ENCODE measurements at regions of chr1 and their contacts with region 1.

Region 1: DNA sequence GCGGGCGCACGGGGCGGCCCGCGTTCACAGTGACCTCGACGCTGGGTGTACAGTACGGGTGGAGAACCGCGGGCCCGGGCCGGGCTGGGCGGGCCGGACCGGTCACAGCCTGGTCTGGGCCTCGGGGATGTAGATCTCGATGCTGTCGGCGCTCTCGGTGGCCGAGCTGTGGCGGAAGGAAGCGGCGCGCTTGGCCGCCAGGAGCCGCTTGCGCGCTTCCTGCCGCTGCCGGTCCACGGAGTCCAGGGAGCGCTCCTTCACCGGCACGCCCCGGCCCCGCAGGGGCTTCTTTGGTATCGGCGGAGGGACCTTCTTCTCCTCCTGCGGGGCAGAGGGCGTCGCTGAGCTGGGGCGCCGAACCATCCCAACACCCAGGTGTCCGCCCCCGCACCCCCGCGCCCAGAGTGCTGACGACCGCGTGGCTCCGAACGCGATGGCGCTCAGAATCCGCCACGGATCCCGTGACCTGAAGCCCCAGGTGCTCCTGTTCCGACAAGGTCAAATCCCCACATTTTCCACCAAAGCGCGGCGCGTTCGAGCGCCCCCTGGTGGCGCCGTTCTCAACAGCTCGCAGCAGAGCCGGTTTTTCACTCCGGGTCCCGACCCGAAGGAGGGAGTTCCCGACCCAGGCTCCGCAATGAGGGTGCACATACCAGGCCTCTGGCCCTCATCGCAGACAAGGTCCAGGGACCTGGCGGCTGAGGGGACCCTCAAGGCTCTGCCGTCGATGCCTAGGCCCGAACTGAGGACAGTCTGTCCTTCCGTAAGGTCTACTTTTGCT is 6.6 kb upstream of the SMIM12 start:
- DNase-seq: peak; percentile 80 to 93 (median 86)
- ATAC-seq: peak; percentile 32 to 84 (median 76)
- H3K4me3 ChIP-seq: peak overlapping the region; percentile 32 to 95 (median 71)
- H3K27ac ChIP-seq: peak overlapping the region in 11 of 12 donors; percentile 60 to 94 (median 83)
- H3K4me1 ChIP-seq: peaks cover 0 to 23% (median 10%) of the 10 kb centered on the region in 12 donors
- H3K27me3 ChIP-seq: no peaks in the 10 kb centered on the region
- CTCF ChIP-seq: peak; percentile 93 to 99 (median 98)
- POLR2A ChIP-seq: no peak

Region 2: GRCh38 chr1:34786521-34787325 is 79.4 kb before region 1 on chr1:
- intact Hi-C with region 1: loop called in 5 of 10 experiments (anchors 1 to 5 kb)
- DNase-seq: peak; percentile 66 to 79 (median 73)
- ATAC-seq: peak; percentile 50 to 82 (median 78)
- H3K4me3 ChIP-seq: no peak overlapping the region
- H3K27ac ChIP-seq: no peak overlapping the region
- H3K4me1 ChIP-seq: peaks cover 0 to 34% (median 6%) of the 10 kb centered on the region in 12 donors
- H3K27me3 ChIP-seq: peaks cover 6 to 22% (median 10%) of the 10 kb centered on the region in 9 donors
- CTCF ChIP-seq: peak; percentile 80 to 93 (median 86)
- POLR2A ChIP-seq: no peak

Region 3: DNA sequence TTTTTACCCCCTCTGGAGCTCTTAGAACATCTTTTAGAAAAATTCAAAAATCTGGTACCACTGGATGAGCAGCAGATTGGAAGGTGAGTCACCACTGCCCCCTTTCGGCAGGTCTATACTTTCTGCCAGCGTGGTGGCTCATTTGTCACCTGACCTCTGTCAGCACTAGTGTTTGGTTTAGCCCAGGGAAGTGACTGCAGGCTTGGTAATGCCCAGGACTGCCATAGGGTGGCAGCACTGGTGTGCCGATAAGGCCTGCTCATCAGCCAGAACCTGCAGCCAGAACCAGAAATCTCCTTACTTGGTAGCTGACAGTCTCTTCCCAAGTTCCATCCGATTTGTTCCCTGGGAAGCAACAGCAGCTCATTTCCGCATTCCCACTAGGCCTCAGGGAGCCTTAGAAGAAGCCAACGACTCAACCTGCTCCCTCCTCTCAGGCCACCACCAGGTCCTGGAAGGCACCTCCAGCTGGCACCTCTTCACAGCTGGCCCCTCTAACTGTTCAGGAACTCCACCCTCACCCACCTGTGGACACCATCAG is 13.4 kb before region 1 on chr1:
- intact Hi-C with region 1: loop called in 2 of 10 experiments (anchors 1 kb)
- DNase-seq: peak; percentile 86 to 90 (median 88)
- ATAC-seq: peak; percentile 83 to 95 (median 94)
- H3K4me3 ChIP-seq: no peak overlapping the region
- H3K27ac ChIP-seq: peak overlapping the region in 10 of 12 donors; percentile 1 to 77 (median 56)
- H3K4me1 ChIP-seq: peaks cover 0 to 57% (median 32%) of the 10 kb centered on the region in 12 donors
- H3K27me3 ChIP-seq: no peaks in the 10 kb centered on the region
- CTCF ChIP-seq: peak; percentile 92 to 98 (median 97)
- POLR2A ChIP-seq: peak in 1 of 2 donors; percentile 12

Region 4: GRCh38 chr1:34976384-34977209 is 110.4 kb after region 1 on chr1:
- intact Hi-C with region 1: loop called in 4 of 10 experiments (anchors 5 to 10 kb)
- DNase-seq: no peak
- ATAC-seq: peak in 1 of 4 donors; percentile 43
- H3K4me3 ChIP-seq: peak overlapping the region in 1 of 12 donors; percentile 13
- H3K27ac ChIP-seq: no peak overlapping the region
- H3K4me1 ChIP-seq: peaks cover 0 to 6% (median 0%) of the 10 kb centered on the region in 12 donors
- H3K27me3 ChIP-seq: no peaks in the 10 kb centered on the region
- CTCF ChIP-seq: no peak
- POLR2A ChIP-seq: no peak

Region 5: GRCh38 chr1:34984793-34985608 is 118.8 kb after region 1 on chr1 and contains the start of gene TMEM35B:
- intact Hi-C with region 1: loop called in 3 of 10 experiments (anchors 5 to 10 kb)
- DNase-seq: peak; percentile 75 to 90 (median 80)
- ATAC-seq: peak; percentile 68 to 95 (median 92)
- H3K4me3 ChIP-seq: peak within 1 kb of the TSS; percentile 52 to 99 (median 80)
- H3K27ac ChIP-seq: peak within 1 kb of the TSS; percentile 72 to 98 (median 92)
- H3K4me1 ChIP-seq: peaks cover 0 to 29% (median 18%) of the 10 kb centered on the region in 12 donors
- H3K27me3 ChIP-seq: no peaks in the 10 kb centered on the region
- CTCF ChIP-seq: peak in 2 of 12 donors; percentile 11 to 12
- POLR2A ChIP-seq: peak in 1 of 2 donors; percentile 72
- total RNA-seq, gene TMEM35B: 4.0 to 19.9 (median 8.6) TPM